Left ventricle myocardium superior (tissue), 1 donor: ENCODE measurements at regions of chr1 and their contacts with region 1.

Region 1: GRCh38 chr1:102191723-102192122 is 195.0 kb upstream of the OLFM3 start:
- DNase-seq: no peak
- ATAC-seq: peak; percentile 71

Region 2: GRCh38 chr1:101797740-101798139 is 394.0 kb before region 1 on chr1:
- intact Hi-C with region 1: no loop called
- DNase-seq: no peak
- ATAC-seq: no peak

Region 3: DNA sequence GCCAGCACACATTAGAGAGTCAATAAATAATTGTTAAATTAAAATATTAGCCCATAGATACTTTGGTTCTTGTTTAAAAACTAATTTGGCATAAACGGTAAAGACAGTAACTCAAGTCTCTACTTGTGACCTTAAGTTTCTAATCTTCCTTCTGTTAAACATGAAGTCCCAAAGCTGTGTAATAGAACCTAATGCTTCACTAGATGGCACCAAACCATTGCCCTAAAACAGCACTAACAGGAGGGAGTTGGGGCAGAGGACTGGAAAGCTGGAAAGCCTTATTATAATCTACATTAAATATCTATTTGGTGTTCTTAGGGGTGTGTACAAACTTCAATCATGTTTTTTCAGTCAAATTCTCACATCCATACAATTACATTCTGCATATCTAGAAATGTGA is 371.7 kb before region 1 on chr1:
- intact Hi-C with region 1: loop called (anchors 2 kb)
- DNase-seq: no peak
- ATAC-seq: peak; percentile 62

Region 4: DNA sequence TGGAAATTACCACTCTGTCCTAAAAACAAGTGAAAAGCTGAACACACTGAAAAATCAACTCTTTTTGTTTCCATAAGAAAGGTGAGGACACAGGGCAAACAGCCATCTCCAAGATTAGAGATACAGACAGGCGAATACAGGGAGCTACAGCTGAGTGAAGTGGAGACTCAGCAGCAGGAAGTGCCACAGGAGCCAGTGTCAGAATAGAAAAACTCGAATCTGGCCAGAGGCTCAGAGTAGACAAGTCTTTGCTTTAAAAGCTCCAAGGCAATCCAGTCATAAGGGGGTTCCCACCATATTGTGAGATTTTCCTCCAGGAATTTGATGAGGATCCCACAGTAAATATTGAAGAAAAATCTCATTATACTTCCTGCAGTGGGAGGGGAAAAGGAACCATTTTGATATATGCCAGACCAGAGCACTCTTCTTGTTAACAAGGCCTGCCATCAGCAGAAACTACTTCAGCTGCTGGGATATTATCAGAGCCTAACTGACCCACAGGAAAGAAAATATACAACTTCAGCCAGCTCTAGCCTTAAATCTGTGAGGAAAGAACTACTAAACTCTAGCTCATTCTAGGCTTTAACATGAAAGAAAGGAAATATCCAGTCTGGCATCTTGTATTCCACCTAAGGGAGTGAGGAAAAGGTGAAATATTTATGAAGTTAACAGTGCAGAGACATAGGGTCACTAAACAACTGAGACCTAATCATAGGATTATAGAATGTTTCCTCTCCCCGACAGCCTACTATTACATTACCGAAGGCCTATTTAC is 61.2 kb after region 1 on chr1:
- intact Hi-C with region 1: no loop called
- DNase-seq: no peak
- ATAC-seq: no peak

Region 5: DNA sequence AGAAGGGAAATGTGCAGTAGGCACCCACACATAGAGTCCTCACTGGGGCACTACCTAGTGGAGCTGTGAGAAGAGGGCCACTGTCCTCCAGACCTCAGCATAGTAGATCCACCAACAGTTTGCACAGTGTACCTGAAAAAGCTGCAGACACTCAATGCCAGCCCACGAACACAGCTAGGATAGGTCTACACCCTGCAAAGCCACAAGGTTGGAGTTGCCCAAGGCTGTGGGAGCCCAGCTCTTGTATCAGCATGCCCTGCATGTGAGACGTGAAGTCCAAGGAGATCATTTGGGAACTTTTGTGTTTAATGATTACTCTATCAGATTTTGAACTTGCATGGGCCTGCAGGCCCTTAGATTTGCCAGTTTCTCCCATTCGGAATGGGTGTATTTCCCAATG is 104.4 kb after region 1 on chr1:
- intact Hi-C with region 1: no loop called
- DNase-seq: no peak
- ATAC-seq: no peak